ENCODE measurements at regions of chrX and their contacts with region 1.

Region 1: DNA sequence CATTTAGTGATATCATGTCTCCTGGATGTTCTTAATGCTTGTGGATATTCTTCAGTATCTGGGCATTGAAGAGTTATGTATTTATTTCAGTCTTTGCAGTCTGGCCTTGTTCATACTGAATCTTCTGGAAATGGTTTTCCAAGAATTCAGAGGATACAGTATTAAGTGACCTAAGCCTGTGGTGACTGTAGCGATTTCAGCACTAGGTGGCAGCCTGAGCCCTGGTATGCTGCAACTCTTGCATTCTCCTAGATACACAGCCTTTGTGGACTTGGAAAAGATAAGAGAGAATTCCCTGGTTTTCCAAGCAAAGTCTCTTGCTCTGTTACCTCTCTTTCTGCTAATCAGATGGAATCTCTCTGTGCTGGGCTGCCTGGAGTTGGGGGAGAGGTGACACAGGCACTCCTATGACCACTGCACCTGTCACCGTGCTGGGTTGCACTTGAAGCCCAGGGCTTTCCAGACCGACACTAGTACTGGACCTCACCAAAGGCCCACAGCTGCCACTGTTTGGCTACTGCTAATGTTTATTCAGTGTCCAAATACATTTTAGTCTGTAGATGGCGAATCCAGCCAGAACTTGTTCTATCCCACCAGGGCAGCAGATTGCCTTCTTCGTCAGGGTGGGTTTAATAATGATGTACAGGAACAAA is 19.3 kb upstream of the SPIN2A start:
- DNase-seq: peak in 1 of 2 donors; percentile 8
- ATAC-seq: peak in 5 of 8 donors; percentile 44 to 81 (median 70)
- H3K4me3 ChIP-seq: no peak overlapping the region
- H3K27ac ChIP-seq: no peak overlapping the region
- H3K4me1 ChIP-seq: no peaks in the 10 kb centered on the region
- H3K27me3 ChIP-seq: no peaks in the 10 kb centered on the region
- CTCF ChIP-seq: peak in 8 of 9 donors; percentile 9 to 58 (median 45)

Region 2: DNA sequence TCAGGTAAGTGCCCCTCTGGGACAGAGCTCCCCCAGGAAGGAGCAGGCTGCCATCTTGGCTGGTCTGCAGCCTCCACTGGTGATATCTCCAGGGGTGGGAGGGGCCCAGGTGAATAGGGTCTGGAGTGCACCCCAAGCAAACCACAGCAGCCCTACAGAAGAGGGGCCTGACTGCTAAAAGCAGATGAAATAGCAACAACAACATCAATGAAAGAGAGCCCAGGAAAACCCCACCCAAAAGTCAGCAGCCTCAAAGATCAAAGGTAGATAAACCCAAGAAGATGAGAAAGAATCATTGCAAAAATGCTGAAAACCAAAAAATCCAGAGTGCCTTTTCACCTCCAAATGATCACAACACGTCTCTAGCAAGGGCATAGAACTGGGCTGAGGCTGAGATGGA is 1799.3 kb before region 1 on chrX:
- intact Hi-C with region 1: loop called in 1 of 10 experiments (anchors 10 kb)
- DNase-seq: no peak
- ATAC-seq: no peak
- H3K4me3 ChIP-seq: no peak overlapping the region
- H3K27ac ChIP-seq: no peak overlapping the region
- H3K4me1 ChIP-seq: no peaks in the 10 kb centered on the region
- H3K27me3 ChIP-seq: peaks cover 0 to 22% (median 0%) of the 10 kb centered on the region in 7 donors
- CTCF ChIP-seq: no peak

Region 3: DNA sequence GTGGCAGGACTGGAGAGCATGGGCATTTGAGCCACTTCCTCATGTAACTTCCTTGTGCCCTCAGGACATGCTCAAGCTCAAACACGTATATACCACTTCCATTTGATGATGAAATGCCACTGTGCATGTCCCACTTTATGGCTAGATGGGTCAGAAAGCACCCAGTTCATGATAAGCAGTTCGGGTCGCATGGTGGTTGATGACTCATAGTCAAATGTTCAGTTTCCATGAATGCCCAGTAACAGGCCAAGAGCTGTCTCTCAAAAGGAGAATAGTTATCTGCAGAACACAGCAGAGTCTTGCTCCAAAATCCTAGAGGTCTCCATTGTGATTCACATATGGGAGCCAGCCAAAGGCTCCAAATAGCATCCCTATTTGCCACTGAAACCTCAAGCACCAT is 112.3 kb before region 1 on chrX:
- intact Hi-C with region 1: no loop called
- DNase-seq: no peak
- ATAC-seq: no peak
- H3K4me3 ChIP-seq: no peak overlapping the region
- H3K27ac ChIP-seq: no peak overlapping the region
- H3K4me1 ChIP-seq: no peaks in the 10 kb centered on the region
- H3K27me3 ChIP-seq: peaks cover 0 to 58% (median 0%) of the 10 kb centered on the region in 7 donors
- CTCF ChIP-seq: no peak

Region 4: DNA sequence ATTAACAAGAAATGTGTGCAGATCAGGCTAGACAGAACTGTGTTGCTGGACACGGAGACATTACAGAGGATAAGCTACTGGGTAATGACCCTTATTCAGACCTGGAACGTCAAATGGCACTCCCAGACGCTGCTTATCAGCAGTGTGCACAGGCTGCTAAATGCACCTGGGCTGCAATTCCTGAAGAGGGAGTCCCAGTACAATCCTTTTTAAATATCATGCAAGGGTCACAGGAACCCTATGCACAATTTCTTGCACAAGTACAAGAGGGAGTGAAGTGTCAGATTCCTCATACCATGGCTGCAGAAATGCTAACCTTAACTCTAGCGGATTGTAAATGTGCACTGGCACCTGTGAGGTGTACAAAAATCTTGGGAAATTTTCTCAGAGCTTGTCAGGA is 52.1 kb before region 1 on chrX:
- intact Hi-C with region 1: no loop called
- DNase-seq: no peak
- ATAC-seq: no peak
- H3K4me3 ChIP-seq: no peak overlapping the region
- H3K27ac ChIP-seq: no peak overlapping the region
- H3K4me1 ChIP-seq: no peaks in the 10 kb centered on the region
- H3K27me3 ChIP-seq: no peaks in the 10 kb centered on the region
- CTCF ChIP-seq: no peak

Region 5: DNA sequence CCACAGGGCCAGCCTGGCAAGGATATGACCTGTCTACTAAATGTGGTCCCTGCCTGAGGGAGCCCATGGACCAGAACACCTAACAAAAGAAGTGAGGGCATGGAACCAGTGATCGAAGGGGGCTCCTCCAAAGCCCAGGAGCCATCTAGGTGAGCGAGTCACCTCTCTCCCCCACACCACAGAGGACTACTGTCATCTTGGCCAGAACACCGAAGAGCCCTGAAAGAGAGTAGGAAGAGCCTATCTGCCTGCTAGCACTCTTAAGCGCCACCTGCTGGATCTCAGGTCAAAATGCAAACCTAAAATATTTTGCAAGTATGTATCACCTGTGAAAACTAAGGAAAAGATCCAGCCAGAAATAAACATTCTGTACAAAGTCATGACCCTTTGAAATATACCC is 297.4 kb after region 1 on chrX:
- intact Hi-C with region 1: loop called in 7 of 10 experiments (anchors 5 to 10 kb)
- DNase-seq: no peak
- ATAC-seq: no peak
- H3K4me3 ChIP-seq: no peak overlapping the region
- H3K27ac ChIP-seq: no peak overlapping the region
- H3K4me1 ChIP-seq: no peaks in the 10 kb centered on the region
- H3K27me3 ChIP-seq: peaks cover 0 to 11% (median 0%) of the 10 kb centered on the region in 7 donors
- CTCF ChIP-seq: peak in 8 of 9 donors; percentile 9 to 62 (median 42)

Measured in heart right ventricle (tissue), 16 donors.